ENCODE measurements at regions of chr2 and their contacts with region 1.

Region 1: DNA sequence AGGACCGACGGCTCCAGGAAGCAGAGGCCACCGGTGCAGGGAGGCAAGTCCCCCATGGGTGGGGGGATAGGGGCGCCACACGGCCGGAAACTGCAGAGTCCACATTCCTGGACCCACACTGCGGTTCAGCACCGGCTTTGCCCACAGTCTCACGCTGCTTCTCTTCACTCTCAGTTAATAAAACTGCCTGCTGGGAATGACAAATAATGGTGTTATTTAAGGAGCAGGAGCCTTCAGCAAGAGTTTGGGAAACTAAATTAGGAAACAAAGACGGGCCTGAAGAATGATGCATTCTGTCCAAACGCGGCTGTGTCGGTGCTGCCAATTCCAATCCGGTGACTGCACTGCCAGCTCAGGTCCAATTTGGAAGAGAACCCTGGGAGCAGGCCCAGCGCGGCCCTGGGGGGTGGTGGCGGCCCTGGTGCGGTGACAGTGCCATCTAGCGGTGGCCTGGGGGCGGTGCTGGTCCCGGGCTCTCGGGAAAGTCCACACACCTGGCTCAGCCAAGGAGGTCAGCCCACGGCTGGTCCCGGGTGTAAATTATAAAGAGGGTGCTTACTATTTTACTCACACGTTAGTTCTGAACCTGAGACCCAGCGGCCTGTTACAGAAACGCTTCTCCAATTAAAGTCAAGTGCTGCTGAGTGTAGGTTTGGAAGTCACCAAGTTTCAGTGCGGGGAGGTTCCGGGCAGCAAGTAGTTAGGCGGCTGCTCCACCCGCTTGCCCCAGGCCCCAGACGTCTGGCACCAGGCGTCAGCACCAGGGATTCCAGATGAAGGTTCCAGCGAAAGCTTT is 73.1 kb upstream of the PXDN start:
- DNase-seq: peak; percentile 88
- ATAC-seq: peak; percentile 94

Region 2: DNA sequence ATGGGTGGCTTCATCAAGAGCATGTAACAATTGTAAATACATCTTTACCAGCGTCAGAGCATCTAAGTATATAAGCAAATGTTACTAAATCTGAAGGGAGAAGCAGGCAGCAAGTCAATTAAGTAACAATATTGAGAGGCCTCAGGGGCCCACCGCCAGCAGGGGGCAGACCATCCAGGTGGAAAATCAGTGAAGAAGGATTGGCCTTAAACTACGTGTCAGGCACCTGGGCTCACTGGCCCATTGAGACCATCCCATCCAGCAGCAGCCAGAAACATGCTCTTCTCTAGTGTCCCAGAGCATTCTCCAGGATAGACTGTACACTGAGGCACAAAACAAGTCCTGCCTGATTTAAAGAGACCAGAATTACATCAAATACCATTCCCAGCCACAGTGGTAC is 963.0 kb before region 1 on chr2:
- intact Hi-C with region 1: loop called (anchors 10 kb)
- DNase-seq: no peak
- ATAC-seq: no peak

Region 3: GRCh38 chr2:1563943-1564891 is 253.2 kb before region 1 on chr2:
- intact Hi-C with region 1: no loop called
- DNase-seq: peak; percentile 53
- ATAC-seq: peak; percentile 20

Measured in Right ventricle myocardium inferior (tissue), 1 donor.